Activated CD4-positive, alpha-beta memory T cell treated with anti-CD3 and anti-CD28 coated beads for 36 hours (primary cell): ENCODE measurements at regions of chr5 and their contacts with region 1.

Region 1: GRCh38 chr5:10761166-10761932 is at the start of gene DAP:
- DNase-seq: peak; percentile 85
- H3K4me3 Mint-ChIP-seq: peak within 1 kb of the TSS; percentile 85
- H3K27ac Mint-ChIP-seq: peak within 1 kb of the TSS; percentile 78
- H3K4me1 Mint-ChIP-seq: peaks cover 37% of the 10 kb centered on the region
- H3K27me3 Mint-ChIP-seq: no peaks in the 10 kb centered on the region
- total RNA-seq, gene DAP: 39.0 to 39.7 TPM

Region 2: GRCh38 chr5:10249948-10250803 is 511.2 kb before region 1 on chr5 and contains the start of gene CCT5:
- CTCF ChIA-PET with region 1: no interaction called
- POLR2A ChIA-PET with region 1: no interaction called
- intact Hi-C with region 1: loop called (anchors 2 kb)
- DNase-seq: peak; percentile 93
- H3K4me3 Mint-ChIP-seq: peak within 1 kb of the TSS; percentile 84
- H3K27ac Mint-ChIP-seq: peak within 1 kb of the TSS; percentile 99
- H3K4me1 Mint-ChIP-seq: peaks cover 47% of the 10 kb centered on the region
- H3K27me3 Mint-ChIP-seq: no peaks in the 10 kb centered on the region
- total RNA-seq, gene CCT5: 360 to 375 TPM

Region 3: GRCh38 chr5:10441083-10441991 is 320.0 kb before region 1 on chr5 and contains the start of gene ROPN1L:
- CTCF ChIA-PET with region 1: no interaction called
- POLR2A ChIA-PET with region 1: no interaction called
- intact Hi-C with region 1: loop called (anchors 5 kb)
- DNase-seq: peak; percentile 86
- H3K4me3 Mint-ChIP-seq: peak within 1 kb of the TSS; percentile 78
- H3K27ac Mint-ChIP-seq: no peak within 1 kb of the TSS
- H3K4me1 Mint-ChIP-seq: peaks cover 33% of the 10 kb centered on the region
- H3K27me3 Mint-ChIP-seq: no peaks in the 10 kb centered on the region
- total RNA-seq, gene ROPN1L: not detected

Region 4: DNA sequence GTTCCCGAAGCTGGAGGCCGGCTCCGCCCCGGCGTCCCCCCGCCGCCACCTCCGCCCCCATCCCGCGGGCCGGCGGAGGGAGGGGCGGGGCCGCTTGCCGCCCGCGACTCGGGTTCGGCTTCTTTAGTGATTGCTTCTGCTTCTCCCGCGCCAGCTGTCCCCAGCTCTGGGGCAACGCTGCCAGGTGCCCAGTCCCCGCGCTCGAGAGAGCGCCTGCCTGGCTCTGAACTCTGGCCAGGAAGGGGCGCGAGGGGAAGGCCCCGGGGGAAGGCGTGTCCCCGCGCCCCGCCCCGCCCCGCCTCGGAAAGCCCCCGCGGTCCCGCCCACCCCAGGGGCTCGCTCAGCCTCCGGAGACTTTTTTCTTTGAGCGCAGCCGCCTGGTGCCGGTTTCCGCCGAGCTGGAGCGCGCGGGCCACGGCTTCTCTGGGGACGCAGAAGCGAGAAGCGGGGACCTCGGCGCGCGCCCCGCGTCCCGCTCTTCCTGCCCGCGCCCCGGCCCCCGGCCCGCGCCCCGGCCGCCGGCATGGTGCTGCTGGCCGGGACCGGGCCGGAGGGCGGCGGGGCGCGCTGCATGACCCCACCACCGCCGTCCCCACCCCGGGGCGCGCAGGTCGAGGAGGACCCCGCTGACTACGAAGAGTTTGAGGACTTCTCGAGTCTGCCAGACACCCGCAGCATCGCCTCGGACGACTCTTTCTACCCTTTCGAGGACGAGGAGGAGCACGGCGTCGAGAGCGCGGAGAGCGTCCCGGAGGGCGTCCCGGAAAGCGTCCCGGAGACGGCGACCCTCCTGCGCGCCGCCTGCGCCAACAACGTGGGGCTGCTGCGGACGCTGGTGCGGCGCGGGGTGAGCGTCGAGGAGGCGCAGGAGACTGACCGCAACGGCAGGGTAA is 197.2 kb before region 1 on chr5 and contains the start of gene ANKRD33B:
- CTCF ChIA-PET with region 1: no interaction called
- POLR2A ChIA-PET with region 1: no interaction called
- intact Hi-C with region 1: loop called (anchors 1 kb)
- DNase-seq: peak; percentile 88
- H3K4me3 Mint-ChIP-seq: peak within 1 kb of the TSS; percentile 84
- H3K27ac Mint-ChIP-seq: peak within 1 kb of the TSS; percentile 79
- H3K4me1 Mint-ChIP-seq: peaks cover 21% of the 10 kb centered on the region
- H3K27me3 Mint-ChIP-seq: peaks cover 3% of the 10 kb centered on the region
- total RNA-seq, gene ANKRD33B: 9.9 to 10.0 TPM

Region 5: GRCh38 chr5:10701567-10702039 is 59.7 kb before region 1 on chr5:
- CTCF ChIA-PET with region 1: no interaction called
- POLR2A ChIA-PET with region 1: no interaction called
- intact Hi-C with region 1: loop called (anchors 2 kb)
- DNase-seq: peak; percentile 27
- H3K4me3 Mint-ChIP-seq: no peak overlapping the region
- H3K27ac Mint-ChIP-seq: no peak overlapping the region
- H3K4me1 Mint-ChIP-seq: peaks cover 38% of the 10 kb centered on the region
- H3K27me3 Mint-ChIP-seq: no peaks in the 10 kb centered on the region

Region 6: GRCh38 chr5:10724799-10725507 is 36.4 kb before region 1 on chr5:
- CTCF ChIA-PET with region 1: no interaction called
- POLR2A ChIA-PET with region 1: no interaction called
- intact Hi-C with region 1: loop called (anchors 1 kb)
- DNase-seq: no peak
- H3K4me3 Mint-ChIP-seq: no peak overlapping the region
- H3K27ac Mint-ChIP-seq: no peak overlapping the region
- H3K4me1 Mint-ChIP-seq: peaks cover 18% of the 10 kb centered on the region
- H3K27me3 Mint-ChIP-seq: no peaks in the 10 kb centered on the region

Region 7: GRCh38 chr5:10875201-10875768 is 113.9 kb after region 1 on chr5:
- CTCF ChIA-PET with region 1: no interaction called
- POLR2A ChIA-PET with region 1: no interaction called
- intact Hi-C with region 1: no loop called
- DNase-seq: no peak
- H3K4me3 Mint-ChIP-seq: no peak overlapping the region
- H3K27ac Mint-ChIP-seq: no peak overlapping the region
- H3K4me1 Mint-ChIP-seq: no peaks in the 10 kb centered on the region
- H3K27me3 Mint-ChIP-seq: peaks cover 10% of the 10 kb centered on the region